ENCODE measurements at regions of chr11 and their contacts with region 1.

Region 1: GRCh38 chr11:2885676-2886081 is at the start of gene CDKN1C:
- DNase-seq: peak; percentile 82 to 87 (median 85)
- ATAC-seq: peak; percentile 95
- H3K4me3 ChIP-seq: peak within 1 kb of the TSS; percentile 75
- H3K4me3 Mint-ChIP-seq: peak within 1 kb of the TSS; percentile 85 to 96 (median 92)
- H3K27ac ChIP-seq: peak within 1 kb of the TSS; percentile 68
- H3K27ac Mint-ChIP-seq: peak within 1 kb of the TSS in 8 of 9 donors; percentile 26 to 93 (median 80)
- H3K4me1 ChIP-seq: peaks cover 5 to 7% of the 10 kb centered on the region in 2 donors
- H3K4me1 Mint-ChIP-seq: peaks cover 0 to 32% (median 22%) of the 10 kb centered on the region in 7 donors
- H3K27me3 ChIP-seq: no peaks in the 10 kb centered on the region
- H3K27me3 Mint-ChIP-seq: peaks cover 0 to 43% (median 0%) of the 10 kb centered on the region in 5 donors
- total RNA-seq, gene CDKN1C: 0.53 to 36.0 (median 6.0) TPM

Region 2: GRCh38 chr11:2377511-2378443 is 507.9 kb before region 1 on chr11:
- CTCF ChIA-PET with region 1: no interaction called
- POLR2A ChIA-PET with region 1: no interaction called
- intact Hi-C with region 1: loop called in 1 of 2 experiments (anchors 5 kb)
- DNase-seq: peak in 8 of 9 donors; percentile 34 to 73 (median 52)
- ATAC-seq: peak; percentile 54
- H3K4me3 ChIP-seq: peak overlapping the region; percentile 83
- H3K4me3 Mint-ChIP-seq: peak overlapping the region; percentile 71 to 89 (median 84)
- H3K27ac ChIP-seq: peak overlapping the region; percentile 89
- H3K27ac Mint-ChIP-seq: peak overlapping the region in 7 of 9 donors; percentile 57 to 89 (median 81)
- H3K4me1 ChIP-seq: peaks cover 19 to 21% of the 10 kb centered on the region in 2 donors
- H3K4me1 Mint-ChIP-seq: peaks cover 13 to 44% (median 20%) of the 10 kb centered on the region in 7 donors
- H3K27me3 ChIP-seq: no peaks in the 10 kb centered on the region
- H3K27me3 Mint-ChIP-seq: peaks cover 0 to 7% (median 0%) of the 10 kb centered on the region in 5 donors

Region 3: DNA sequence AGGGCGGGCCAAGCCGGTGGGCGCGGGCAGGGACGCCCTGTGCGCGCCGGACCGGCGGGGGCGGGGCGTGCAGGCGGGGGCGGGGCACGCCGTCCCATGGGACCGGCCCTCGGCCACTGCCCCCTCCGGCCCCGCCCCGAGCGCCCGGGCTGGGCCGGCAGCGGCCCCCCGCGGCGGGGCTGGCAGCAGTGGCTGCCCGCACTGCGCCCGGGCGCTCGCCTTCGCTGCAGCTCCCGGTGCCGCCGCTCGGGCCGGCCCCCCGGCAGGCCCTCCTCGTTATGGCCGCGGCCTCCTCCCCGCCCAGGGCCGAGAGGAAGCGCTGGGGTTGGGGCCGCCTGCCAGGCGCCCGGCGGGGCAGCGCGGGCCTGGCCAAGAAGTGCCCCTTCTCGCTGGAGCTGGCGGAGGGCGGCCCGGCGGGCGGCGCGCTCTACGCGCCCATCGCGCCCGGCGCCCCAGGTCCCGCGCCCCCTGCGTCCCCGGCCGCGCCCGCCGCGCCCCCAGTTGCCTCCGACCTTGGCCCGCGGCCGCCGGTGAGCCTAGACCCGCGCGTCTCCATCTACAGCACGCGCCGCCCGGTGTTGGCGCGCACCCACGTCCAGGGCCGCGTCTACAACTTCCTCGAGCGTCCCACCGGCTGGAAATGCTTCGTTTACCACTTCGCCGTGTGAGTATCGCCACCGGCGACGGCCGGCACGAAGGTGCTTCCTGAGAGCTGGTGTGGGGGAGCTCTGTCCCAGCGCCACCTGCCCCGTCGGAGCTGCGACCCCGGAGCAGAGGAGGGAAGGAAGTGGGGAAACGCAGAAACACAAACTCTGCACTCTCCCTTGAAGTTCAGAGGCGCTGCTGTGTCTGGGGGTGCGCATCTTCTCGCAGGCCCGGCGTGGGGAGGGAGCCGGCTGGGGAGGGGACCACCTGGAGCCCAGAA is 440.6 kb before region 1 on chr11 and contains the start of gene KCNQ1:
- CTCF ChIA-PET with region 1: interaction called, 3 read pairs
- POLR2A ChIA-PET with region 1: interaction called, 3 read pairs
- intact Hi-C with region 1: loop called (anchors 5 kb)
- DNase-seq: peak in 8 of 9 donors; percentile 26 to 75 (median 46)
- ATAC-seq: peak; percentile 74
- H3K4me3 ChIP-seq: peak within 1 kb of the TSS; percentile 71
- H3K4me3 Mint-ChIP-seq: peak within 1 kb of the TSS; percentile 93 to 99 (median 96)
- H3K27ac ChIP-seq: peak within 1 kb of the TSS; percentile 52
- H3K27ac Mint-ChIP-seq: peak within 1 kb of the TSS; percentile 73 to 92 (median 89)
- H3K4me1 ChIP-seq: peaks cover 22 to 56% of the 10 kb centered on the region in 2 donors
- H3K4me1 Mint-ChIP-seq: peaks cover 22 to 53% (median 41%) of the 10 kb centered on the region in 7 donors
- H3K27me3 ChIP-seq: no peaks in the 10 kb centered on the region
- H3K27me3 Mint-ChIP-seq: peaks cover 0 to 20% (median 0%) of the 10 kb centered on the region in 5 donors
- total RNA-seq, gene KCNQ1: 14.7 to 46.4 (median 41.4) TPM

Region 4: GRCh38 chr11:2691991-2692875 is 193.4 kb before region 1 on chr11:
- CTCF ChIA-PET with region 1: no interaction called
- POLR2A ChIA-PET with region 1: no interaction called
- intact Hi-C with region 1: loop called in 1 of 2 experiments (anchors 2 kb)
- DNase-seq: no peak
- ATAC-seq: no peak
- H3K4me3 ChIP-seq: no peak overlapping the region
- H3K4me3 Mint-ChIP-seq: no peak overlapping the region
- H3K27ac ChIP-seq: no peak overlapping the region
- H3K27ac Mint-ChIP-seq: peak overlapping the region in 2 of 9 donors; percentile 2 to 80
- H3K4me1 ChIP-seq: no peaks in the 10 kb centered on the region
- H3K4me1 Mint-ChIP-seq: peaks cover 0 to 17% (median 0%) of the 10 kb centered on the region in 7 donors
- H3K27me3 ChIP-seq: no peaks in the 10 kb centered on the region
- H3K27me3 Mint-ChIP-seq: no peaks in the 10 kb centered on the region

Region 5: GRCh38 chr11:2901854-2902783 is 16.4 kb after region 1 on chr11:
- CTCF ChIA-PET with region 1: interaction called, 16 read pairs
- POLR2A ChIA-PET with region 1: interaction called, 9 read pairs
- intact Hi-C with region 1: loop called in 1 of 2 experiments (anchors 1 kb)
- DNase-seq: peak; percentile 69 to 92 (median 76)
- ATAC-seq: peak; percentile 91
- H3K4me3 ChIP-seq: peak overlapping the region; percentile 66
- H3K4me3 Mint-ChIP-seq: peak overlapping the region; percentile 43 to 82 (median 78)
- H3K27ac ChIP-seq: peak overlapping the region; percentile 65
- H3K27ac Mint-ChIP-seq: peak overlapping the region in 8 of 9 donors; percentile 38 to 83 (median 70)
- H3K4me1 ChIP-seq: peaks cover 32 to 35% of the 10 kb centered on the region in 2 donors
- H3K4me1 Mint-ChIP-seq: peaks cover 42 to 55% (median 44%) of the 10 kb centered on the region in 7 donors
- H3K27me3 ChIP-seq: no peaks in the 10 kb centered on the region
- H3K27me3 Mint-ChIP-seq: no peaks in the 10 kb centered on the region

Region 6: GRCh38 chr11:2992234-2992996 is 106.7 kb after region 1 on chr11 and contains the start of gene NAP1L4:
- CTCF ChIA-PET with region 1: no interaction called
- POLR2A ChIA-PET with region 1: no interaction called
- intact Hi-C with region 1: loop called (anchors 2 to 5 kb)
- DNase-seq: peak; percentile 88 to 97 (median 95)
- ATAC-seq: peak; percentile 93
- H3K4me3 ChIP-seq: peak within 1 kb of the TSS; percentile 93
- H3K4me3 Mint-ChIP-seq: peak within 1 kb of the TSS; percentile 94 to 100 (median 98)
- H3K27ac ChIP-seq: peak within 1 kb of the TSS; percentile 90
- H3K27ac Mint-ChIP-seq: peak within 1 kb of the TSS; percentile 92 to 99 (median 97)
- H3K4me1 ChIP-seq: peaks cover 2 to 4% of the 10 kb centered on the region in 2 donors
- H3K4me1 Mint-ChIP-seq: peaks cover 23 to 36% (median 27%) of the 10 kb centered on the region in 7 donors
- H3K27me3 ChIP-seq: no peaks in the 10 kb centered on the region
- H3K27me3 Mint-ChIP-seq: no peaks in the 10 kb centered on the region
- total RNA-seq, gene NAP1L4: 245 to 356 (median 294) TPM

Region 7: DNA sequence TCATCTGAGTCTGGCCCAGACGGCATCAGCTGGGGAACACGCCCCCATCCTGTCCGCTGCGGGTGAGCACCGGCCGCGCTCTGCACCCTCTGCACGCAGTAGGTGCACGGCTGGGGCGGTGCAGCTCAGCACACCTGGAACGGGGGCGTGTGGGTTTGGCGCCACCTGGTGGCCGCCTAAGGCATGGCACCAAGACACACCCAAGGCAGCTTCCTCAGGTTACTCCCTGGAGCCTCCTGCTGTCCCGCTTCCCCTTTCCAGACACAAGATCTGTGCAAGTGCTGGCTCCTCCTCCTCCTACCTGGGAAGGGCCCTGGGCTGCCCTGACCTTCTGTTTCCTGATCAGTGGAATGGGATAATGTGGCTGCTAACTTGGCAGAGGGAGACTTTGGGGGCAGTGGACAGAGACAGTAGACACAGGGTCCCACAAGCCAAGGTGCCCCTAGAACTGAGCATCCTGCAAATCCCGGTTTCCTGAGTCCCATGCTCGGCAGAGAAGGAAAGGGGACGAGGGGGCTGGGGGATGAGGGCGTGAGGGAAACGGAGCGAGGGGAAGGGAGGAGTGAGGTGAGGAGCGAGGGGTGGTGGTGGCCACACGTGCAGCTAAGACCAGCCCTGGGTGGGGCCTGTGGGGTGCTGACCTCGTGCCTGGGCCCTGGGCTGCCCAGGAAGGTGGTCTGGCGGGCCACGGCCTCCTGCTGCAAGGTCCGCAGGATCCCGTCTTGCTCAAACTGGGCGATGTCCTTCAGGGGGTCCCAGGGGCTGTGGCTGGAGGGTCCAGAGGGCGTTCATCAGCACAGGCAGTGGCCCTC is 206.3 kb after region 1 on chr11:
- CTCF ChIA-PET with region 1: interaction called, 12 read pairs
- POLR2A ChIA-PET with region 1: no interaction called
- intact Hi-C with region 1: loop called in 1 of 2 experiments (anchors 1 kb)
- DNase-seq: peak; percentile 38 to 79 (median 66)
- ATAC-seq: peak; percentile 87
- H3K4me3 ChIP-seq: no peak overlapping the region
- H3K4me3 Mint-ChIP-seq: no peak overlapping the region
- H3K27ac ChIP-seq: no peak overlapping the region
- H3K27ac Mint-ChIP-seq: peak overlapping the region in 1 of 9 donors; percentile 26
- H3K4me1 ChIP-seq: no peaks in the 10 kb centered on the region
- H3K4me1 Mint-ChIP-seq: peaks cover 0 to 16% (median 0%) of the 10 kb centered on the region in 7 donors
- H3K27me3 ChIP-seq: no peaks in the 10 kb centered on the region
- H3K27me3 Mint-ChIP-seq: peaks cover 0 to 4% (median 0%) of the 10 kb centered on the region in 5 donors

Measured in naive thymus-derived CD4-positive, alpha-beta T cell (primary cell).